Esophagus muscularis mucosa (tissue), 4 donors: ENCODE measurements at regions of chr22 and their contacts with region 1.

Region 1: DNA sequence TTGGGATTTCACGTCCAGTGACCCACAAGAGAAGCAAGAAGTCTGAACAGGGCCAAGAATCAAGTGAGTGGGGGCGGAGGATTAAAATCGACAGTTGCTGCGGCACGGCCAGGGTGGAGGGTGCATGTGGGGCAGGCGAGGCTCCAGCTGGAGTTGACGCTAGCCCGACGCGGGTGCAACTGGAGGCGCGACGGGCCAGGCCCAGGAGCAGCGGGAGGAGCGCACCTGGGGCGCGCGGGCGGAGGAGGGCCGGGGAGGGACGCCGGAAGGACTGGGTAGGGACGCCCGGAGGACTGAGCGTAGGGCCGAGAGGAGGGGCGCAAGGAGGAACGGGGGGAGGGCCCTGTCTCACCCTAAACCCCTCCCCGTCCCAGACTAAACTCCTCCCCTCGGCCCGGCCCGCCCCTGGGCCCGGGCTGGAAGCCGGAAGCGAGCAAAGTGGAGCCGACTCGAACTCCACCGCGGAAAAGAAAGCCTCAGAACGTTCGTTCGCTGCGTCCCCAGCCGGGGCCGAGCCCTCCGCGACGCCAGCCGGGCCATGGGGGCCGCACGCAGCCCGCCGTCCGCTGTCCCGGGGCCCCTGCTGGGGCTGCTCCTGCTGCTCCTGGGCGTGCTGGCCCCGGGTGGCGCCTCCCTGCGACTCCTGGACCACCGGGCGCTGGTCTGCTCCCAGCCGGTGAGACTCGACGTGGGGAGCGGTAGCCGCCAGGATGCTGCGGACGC is at the start of gene IL17RA:
- DNase-seq: peak; percentile 98
- H3K4me3 ChIP-seq: peak within 1 kb of the TSS; percentile 74 to 83 (median 80)
- H3K27ac ChIP-seq: peak within 1 kb of the TSS; percentile 79 to 92 (median 89)
- H3K4me1 ChIP-seq: peaks cover 6 to 37% (median 31%) of the 10 kb centered on the region in 4 donors
- H3K27me3 ChIP-seq: peaks cover 0 to 25% (median 6%) of the 10 kb centered on the region in 4 donors
- CTCF ChIP-seq: no peak
- EP300 ChIP-seq: no peak
- POLR2A ChIP-seq: peak; percentile 52
- total RNA-seq, gene IL17RA: 8.7 to 16.2 (median 14.0) TPM

Region 2: GRCh38 chr22:17158568-17159503 is 74.1 kb after region 1 on chr22 and contains the start of gene HDHD5:
- intact Hi-C with region 1: loop called (anchors 5 kb)
- DNase-seq: peak; percentile 97
- H3K4me3 ChIP-seq: peak within 1 kb of the TSS; percentile 71 to 90 (median 76)
- H3K27ac ChIP-seq: peak within 1 kb of the TSS; percentile 89 to 96 (median 92)
- H3K4me1 ChIP-seq: peaks cover 30 to 42% (median 41%) of the 10 kb centered on the region in 4 donors
- H3K27me3 ChIP-seq: no peaks in the 10 kb centered on the region
- CTCF ChIP-seq: no peak
- EP300 ChIP-seq: no peak
- POLR2A ChIP-seq: no peak
- total RNA-seq, gene HDHD5: 29.9 to 45.1 (median 38.8) TPM